Panc1 (cell line): ENCODE measurements at regions of chr1 and their contacts with region 1.

Region 1: DNA sequence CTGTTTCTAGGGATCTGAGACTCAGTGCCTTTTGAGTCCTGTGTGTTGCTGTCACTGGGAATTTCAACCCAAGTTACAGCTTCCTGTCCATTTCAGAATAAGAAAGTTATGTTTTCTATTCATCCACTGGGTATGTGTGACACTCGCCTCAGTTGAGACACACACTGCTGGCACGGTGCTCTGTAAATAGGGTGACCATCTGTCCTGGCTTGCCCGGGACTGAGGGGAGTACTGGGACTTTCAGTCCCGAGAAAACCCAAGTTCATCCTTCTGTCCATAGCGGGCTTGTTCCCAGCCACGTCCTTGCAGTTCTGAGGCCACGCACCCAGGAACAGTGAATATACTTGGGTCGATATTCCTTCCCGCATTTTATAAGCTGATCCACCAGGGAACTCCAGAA is 56.3 kb upstream of the DISP3 start:
- DNase-seq: no peak
- ATAC-seq: no peak
- H3K4me3 ChIP-seq: no peak overlapping the region
- H3K27ac ChIP-seq: no peak overlapping the region
- H3K4me1 ChIP-seq: no peaks in the 10 kb centered on the region
- H3K27me3 ChIP-seq: peaks cover 3% of the 10 kb centered on the region; the same call in 1 of the 2 replicates
- CTCF ChIP-seq: no peak

Region 2: DNA sequence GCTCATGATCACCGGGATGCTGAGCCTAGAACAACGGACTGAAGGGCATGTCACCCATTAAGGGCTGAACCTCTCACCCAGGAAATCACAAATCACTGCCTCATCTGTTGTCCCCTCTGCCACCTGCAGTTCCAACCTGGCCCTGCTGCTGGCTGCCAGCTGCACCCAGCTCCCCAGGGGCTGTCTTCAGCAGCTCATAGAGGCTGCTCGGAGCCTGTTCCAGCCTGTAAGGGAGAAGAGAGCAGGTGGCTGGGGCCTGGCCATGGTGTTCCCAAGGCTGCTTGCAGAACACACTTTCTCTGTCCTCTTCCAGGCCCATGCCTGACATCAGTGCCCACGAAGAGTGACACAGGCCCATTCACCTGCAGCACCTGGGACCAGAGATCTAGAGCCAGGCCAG is 11.8 kb after region 1 on chr1:
- CTCF ChIA-PET with region 1: no interaction called
- POLR2A ChIA-PET with region 1: no interaction called
- in situ Hi-C with region 1: no loop called
- intact Hi-C with region 1: no loop called
- DNase-seq: no peak
- ATAC-seq: peak; percentile 31; the same call in 1 of the 2 replicates
- H3K4me3 ChIP-seq: no peak overlapping the region
- H3K27ac ChIP-seq: no peak overlapping the region
- H3K4me1 ChIP-seq: no peaks in the 10 kb centered on the region
- H3K27me3 ChIP-seq: peaks cover 6% of the 10 kb centered on the region; the same call in 1 of the 2 replicates
- CTCF ChIP-seq: no peak

Region 3: DNA sequence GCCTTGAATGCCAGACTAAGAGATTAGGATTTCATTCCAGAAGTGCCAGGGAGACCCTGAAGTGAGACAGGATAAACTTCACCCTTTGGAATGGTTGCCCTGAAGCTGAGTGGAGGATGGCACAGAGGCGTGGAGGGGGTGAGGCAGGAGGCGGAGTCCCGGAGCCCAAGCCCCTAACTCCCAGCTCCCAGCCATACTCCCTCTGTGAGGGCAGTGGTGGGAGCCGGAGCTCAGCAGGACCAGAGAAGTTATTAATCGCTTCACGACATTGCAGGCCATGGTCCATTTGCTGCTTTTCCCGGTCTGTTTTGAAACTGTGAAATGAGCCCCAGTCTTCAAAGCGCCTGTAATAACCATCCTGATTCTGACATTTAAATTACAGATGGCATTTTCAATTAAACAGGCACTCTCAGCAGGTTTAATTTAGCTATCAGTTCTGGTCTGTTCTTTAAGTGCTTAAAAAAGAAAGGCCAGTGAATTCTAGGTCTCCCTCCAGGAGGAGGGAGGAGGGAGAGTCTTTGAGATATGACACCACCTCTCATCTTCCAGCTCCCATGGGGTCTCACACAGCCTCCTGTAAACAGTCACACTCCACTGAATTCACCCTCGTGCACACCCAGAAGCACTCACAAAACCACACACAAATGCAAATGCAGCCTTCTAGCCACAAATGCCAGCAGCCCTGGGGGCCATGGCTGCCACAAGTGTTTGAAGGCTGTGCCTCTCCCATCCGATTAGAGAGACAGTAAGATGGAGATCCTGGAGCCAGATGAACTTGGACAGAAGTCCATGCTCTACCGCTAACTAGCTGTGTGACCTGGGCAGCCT is 211.9 kb after region 1 on chr1:
- CTCF ChIA-PET with region 1: no interaction called
- POLR2A ChIA-PET with region 1: interaction called, 15 read pairs
- in situ Hi-C with region 1: no loop called
- intact Hi-C with region 1: no loop called
- DNase-seq: no peak
- ATAC-seq: no peak
- H3K4me3 ChIP-seq: no peak overlapping the region
- H3K27ac ChIP-seq: no peak overlapping the region
- H3K4me1 ChIP-seq: no peaks in the 10 kb centered on the region
- H3K27me3 ChIP-seq: peaks cover 3% of the 10 kb centered on the region; the same call in 1 of the 2 replicates
- CTCF ChIP-seq: no peak